Left cardiac atrium (tissue), 4 donors: ENCODE measurements at regions of chr5 and their contacts with region 1.

Region 1: DNA sequence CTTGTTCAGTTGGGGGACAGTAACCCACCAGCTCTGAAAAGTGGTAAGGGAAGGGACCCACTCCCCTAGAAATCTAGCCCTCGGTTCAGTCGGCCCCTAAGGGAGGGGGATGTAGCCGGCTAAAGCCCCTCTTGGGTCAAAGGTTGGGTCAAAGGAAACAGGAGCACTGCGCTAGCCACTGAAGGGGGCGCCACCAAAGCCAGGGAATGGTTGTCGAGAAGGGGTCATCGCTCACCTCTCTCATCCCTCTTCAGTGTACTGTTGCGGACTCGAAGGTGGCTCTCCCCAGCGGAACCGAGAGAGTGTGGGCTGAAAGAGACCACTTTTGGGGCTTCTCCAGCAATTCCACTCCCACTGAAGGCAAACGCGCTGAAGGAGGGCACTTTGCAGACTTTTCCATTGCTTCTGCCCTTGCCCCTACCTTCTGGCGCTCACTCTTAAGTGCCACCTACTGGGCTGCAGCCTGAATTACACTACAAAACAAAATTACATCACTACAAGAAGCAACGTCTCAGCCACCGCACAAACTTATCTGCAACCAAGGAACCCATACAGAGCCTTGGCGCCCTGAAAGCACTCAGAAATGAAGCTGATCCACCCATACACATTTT is 396.9 kb downstream of the PDE4D start:
- DNase-seq: no peak
- ATAC-seq: no peak

Region 2: GRCh38 chr5:59390074-59390659 is 106.5 kb before region 1 on chr5:
- intact Hi-C with region 1: loop called in 1 of 2 experiments (anchors 5 kb)
- DNase-seq: no peak
- ATAC-seq: no peak

Region 3: GRCh38 chr5:59620535-59621212 is 124.0 kb after region 1 on chr5:
- intact Hi-C with region 1: no loop called
- DNase-seq: no peak
- ATAC-seq: no peak